ENCODE measurements at regions of chr1 and their contacts with region 1.

Region 1: DNA sequence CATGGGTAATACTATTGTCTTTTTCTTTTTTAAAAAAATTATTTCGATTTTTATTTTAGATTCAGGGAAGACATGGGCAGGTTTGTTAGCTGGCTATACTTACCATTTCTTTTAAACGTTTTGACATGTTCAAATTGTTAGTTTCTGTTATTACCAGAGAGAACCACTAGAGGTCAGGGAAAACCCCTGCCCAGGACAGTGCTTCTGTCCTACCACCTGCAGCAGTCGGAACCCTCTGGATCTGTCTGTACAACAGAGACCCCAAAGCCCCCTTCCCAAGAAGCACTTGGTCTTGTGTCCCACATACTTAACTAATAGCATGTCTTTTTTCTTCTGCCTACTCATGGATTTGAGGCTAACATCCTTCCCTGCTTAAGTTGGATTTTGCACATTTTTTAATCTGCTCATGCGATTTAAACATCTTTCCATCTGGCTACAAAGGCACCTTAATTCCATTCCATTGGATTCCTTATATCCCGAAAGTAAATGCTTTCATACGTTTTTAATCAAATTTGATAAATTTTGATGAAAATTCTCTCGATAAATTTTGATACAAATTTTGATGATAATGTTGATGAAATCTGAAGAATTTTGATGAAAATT is 10.0 kb upstream of the C1orf115 start:
- DNase-seq: peak; percentile 27 to 41 (median 31)
- ATAC-seq: peak; percentile 74
- H3K4me3 ChIP-seq: no peak overlapping the region
- H3K27ac ChIP-seq: no peak overlapping the region
- H3K4me1 ChIP-seq: no peaks in the 10 kb centered on the region
- H3K27me3 ChIP-seq: no peaks in the 10 kb centered on the region
- CTCF ChIP-seq: peak; percentile 52 to 80 (median 72)
- POLR2A ChIP-seq: no peak

Region 2: GRCh38 chr1:220776720-220777326 is 96.6 kb after region 1 on chr1:
- intact Hi-C with region 1: loop called (anchors 5 kb)
- DNase-seq: peak; percentile 83 to 91 (median 86)
- ATAC-seq: peak; percentile 95
- H3K4me3 ChIP-seq: no peak overlapping the region
- H3K27ac ChIP-seq: no peak overlapping the region
- H3K4me1 ChIP-seq: no peaks in the 10 kb centered on the region
- H3K27me3 ChIP-seq: no peaks in the 10 kb centered on the region
- CTCF ChIP-seq: peak; percentile 80 to 92 (median 87)
- POLR2A ChIP-seq: no peak

Measured in body of pancreas (tissue), 4 donors.